Left ventricle myocardium inferior (tissue), 1 donor: ENCODE measurements at regions of chr4 and their contacts with region 1.

Region 1: DNA sequence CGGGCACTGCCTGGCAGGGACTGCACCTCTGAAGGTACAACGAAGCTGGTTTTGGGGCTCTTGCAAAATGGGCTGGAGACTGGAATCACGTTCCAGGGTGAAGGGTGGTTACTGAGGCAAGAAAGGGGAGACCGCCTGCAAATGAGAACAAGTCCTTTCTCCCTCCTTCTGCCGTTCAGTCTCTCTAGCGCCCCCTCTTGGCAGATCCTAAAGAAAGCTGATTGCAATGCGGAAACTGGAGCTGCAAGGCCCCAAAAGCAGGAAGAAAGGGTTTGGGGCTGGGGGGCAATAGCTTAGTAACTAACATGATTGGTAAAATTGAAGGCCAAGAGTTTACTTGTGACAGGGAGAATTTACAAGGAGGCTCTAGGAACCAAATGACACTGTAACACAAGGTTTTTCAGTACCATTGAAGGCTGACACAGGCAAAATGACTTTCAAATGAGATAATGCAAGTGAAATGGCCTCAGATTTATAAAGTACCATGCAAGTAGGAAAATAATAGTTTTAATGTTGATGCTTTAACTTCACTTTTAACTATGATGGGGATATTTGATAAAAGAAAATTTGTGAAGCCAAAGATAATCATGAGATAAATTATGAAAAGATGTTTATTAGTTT is 222.7 kb upstream of the HAND2 start:
- DNase-seq: no peak
- H3K4me3 ChIP-seq: no peak overlapping the region
- H3K27ac ChIP-seq: no peak overlapping the region
- H3K4me1 ChIP-seq: no peaks in the 10 kb centered on the region
- H3K27me3 ChIP-seq: no peaks in the 10 kb centered on the region
- CTCF ChIP-seq: peak; percentile 51

Region 2: DNA sequence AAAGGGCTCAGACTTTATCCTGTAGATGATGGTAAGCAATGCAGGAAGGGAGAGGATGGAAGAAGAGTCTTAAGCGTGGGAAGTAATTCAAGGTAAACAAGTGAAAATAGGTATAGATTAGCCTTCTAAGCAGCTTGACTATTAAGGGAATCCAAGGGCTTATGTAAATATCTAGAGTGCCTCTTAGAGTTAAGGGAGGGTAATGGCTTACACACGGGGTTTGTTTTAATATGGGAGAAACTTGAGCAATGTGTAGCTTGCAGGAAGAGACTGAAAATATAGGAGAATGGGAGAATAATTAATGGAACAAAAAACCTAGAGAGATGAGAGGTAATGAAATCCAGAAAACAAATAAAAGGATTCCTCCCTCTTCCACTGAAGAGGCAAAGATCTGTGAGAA is 394.8 kb before region 1 on chr4:
- intact Hi-C with region 1: no loop called
- DNase-seq: no peak
- H3K4me3 ChIP-seq: no peak overlapping the region
- H3K27ac ChIP-seq: no peak overlapping the region
- H3K4me1 ChIP-seq: no peaks in the 10 kb centered on the region
- H3K27me3 ChIP-seq: no peaks in the 10 kb centered on the region
- CTCF ChIP-seq: no peak

Region 3: DNA sequence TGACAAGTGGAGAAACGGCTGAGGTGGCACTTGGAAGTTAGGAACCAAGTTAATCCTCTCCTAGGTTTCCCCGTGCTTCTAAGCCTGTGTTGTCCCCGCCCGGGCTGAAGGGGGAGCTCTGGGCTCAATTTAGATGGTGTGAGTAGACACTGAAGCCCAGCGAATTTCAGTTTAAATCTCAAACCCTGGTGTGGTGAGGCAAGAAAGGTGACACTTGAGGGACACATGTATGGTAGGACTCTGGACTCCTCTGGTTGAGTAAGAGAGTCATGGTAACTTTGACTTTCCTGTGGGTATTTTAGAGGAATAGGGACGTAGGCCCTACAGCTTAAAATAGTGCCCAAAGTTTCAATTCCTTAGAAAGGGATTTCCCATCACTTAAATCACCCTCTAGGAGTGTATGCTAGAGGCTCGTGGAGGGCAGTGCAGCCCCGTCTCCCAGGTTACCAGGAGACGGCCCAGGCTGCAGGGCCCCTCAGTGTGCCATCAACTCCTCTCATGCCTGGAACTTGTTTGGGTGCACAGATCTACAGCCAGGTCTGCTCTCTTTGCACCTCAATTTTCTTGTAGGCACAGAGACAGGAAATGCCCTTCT is 246.7 kb before region 1 on chr4:
- intact Hi-C with region 1: loop called (anchors 10 kb)
- DNase-seq: peak; percentile 63
- H3K4me3 ChIP-seq: peak overlapping the region; percentile 69
- H3K27ac ChIP-seq: peak overlapping the region; percentile 92
- H3K4me1 ChIP-seq: peaks cover 37% of the 10 kb centered on the region
- H3K27me3 ChIP-seq: peaks cover 37% of the 10 kb centered on the region
- CTCF ChIP-seq: peak; percentile 80

Region 4: DNA sequence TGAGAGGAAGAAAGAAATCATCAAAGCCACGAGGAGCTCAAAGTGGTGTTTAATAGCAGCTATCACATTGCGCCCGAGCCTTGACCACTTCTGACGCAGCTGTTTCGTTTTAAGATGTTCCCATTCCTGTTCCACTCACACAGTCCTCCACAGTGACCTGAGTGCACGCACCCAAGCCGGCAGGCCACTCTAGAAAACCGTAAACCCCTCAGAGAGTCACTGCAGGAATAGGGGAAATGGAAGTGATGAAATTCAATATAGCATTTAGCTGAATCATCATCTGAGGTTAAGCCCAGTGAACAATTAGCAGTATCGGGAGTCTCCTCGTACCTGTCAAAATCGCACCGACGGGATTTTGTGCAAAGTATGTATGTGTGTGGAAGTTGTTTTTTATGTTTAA is 204.8 kb before region 1 on chr4:
- intact Hi-C with region 1: loop called (anchors 10 kb)
- DNase-seq: no peak
- H3K4me3 ChIP-seq: peak overlapping the region; percentile 13
- H3K27ac ChIP-seq: peak overlapping the region; percentile 66
- H3K4me1 ChIP-seq: peaks cover 45% of the 10 kb centered on the region
- H3K27me3 ChIP-seq: no peaks in the 10 kb centered on the region
- CTCF ChIP-seq: no peak

Region 5: GRCh38 chr4:173685165-173685830 is 67.4 kb before region 1 on chr4:
- intact Hi-C with region 1: loop called (anchors 10 kb)
- DNase-seq: no peak
- H3K4me3 ChIP-seq: no peak overlapping the region
- H3K27ac ChIP-seq: peak overlapping the region; percentile 86
- H3K4me1 ChIP-seq: peaks cover 38% of the 10 kb centered on the region
- H3K27me3 ChIP-seq: no peaks in the 10 kb centered on the region
- CTCF ChIP-seq: no peak

Region 6: DNA sequence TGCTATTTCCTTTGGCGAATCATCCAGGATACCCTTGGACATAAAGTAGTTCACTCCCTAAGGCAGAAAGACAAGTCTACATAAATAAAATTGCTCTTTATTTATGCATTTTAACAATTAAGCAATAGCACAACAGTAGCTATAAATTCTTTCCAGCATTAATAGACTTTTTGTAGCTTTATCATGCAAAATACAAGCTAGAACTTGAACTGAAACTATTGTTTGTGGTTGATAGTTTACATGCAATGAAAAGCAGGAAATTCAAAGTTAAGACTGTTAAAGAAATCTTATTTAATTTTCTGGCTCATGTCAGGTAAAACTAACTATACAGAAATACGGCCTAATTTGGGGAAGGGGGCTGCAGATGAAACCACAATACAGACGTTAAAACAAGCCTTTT is 488.4 kb after region 1 on chr4:
- intact Hi-C with region 1: no loop called
- DNase-seq: no peak
- H3K4me3 ChIP-seq: no peak overlapping the region
- H3K27ac ChIP-seq: no peak overlapping the region
- H3K4me1 ChIP-seq: peaks cover 6% of the 10 kb centered on the region
- H3K27me3 ChIP-seq: no peaks in the 10 kb centered on the region
- CTCF ChIP-seq: no peak